Activated CD8-positive, alpha-beta T cell treated with anti-CD3 and anti-CD28 coated beads, Interleukin-2, amount 10 ng/mL, durations not matched to agents 7 days and 5 days (primary cell): ENCODE measurements at regions of chr16 and their contacts with region 1.

Region 1: DNA sequence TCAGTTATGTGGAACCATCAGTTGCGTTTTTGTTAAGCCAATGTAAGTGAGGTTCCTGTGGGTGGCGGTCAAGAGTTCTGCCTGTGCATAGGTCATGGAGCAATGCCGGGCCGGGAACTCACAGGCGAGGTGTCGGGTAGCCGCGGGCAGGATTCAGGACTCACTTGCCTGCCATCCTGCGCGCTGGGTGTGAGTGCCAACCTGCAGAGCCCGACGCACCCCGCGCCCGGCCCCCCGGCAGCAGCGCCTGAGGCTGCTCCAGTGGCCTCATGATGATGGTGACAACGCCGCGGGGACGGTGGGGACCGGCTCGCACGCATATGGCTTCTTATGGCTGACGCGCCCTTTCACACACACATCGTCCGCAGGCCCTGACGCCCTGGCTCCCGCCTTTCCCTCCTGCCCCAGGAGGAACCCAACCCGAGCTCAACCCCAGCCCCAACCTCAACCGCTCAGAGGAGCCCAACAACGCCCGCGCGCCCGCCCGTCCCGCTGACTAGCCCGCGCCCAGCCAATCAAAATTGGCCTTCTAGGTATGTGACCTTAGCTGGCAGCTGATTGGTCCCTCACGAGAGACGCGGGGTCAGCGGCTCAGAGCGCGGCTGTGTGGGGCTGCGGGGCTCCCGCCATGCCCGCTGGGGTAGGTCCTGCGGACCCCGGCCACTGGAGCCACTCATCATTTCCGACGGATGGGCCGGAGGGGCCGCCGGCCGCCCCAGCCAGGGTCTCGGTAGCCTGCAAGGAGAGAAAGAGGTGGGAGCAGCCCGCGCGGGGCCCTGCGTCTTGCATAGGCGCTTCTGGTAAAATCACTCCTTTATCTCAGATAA is at the start of gene C16orf95:
- DNase-seq: peak; percentile 96
- ATAC-seq: peak; percentile 93
- H3K4me3 Mint-ChIP-seq: peak within 1 kb of the TSS; percentile 89
- H3K27ac Mint-ChIP-seq: peak within 1 kb of the TSS; percentile 97
- H3K4me1 Mint-ChIP-seq: peaks cover 17% of the 10 kb centered on the region
- H3K27me3 Mint-ChIP-seq: no peaks in the 10 kb centered on the region
- total RNA-seq, gene C16orf95: 7.2 to 9.4 TPM

Region 2: GRCh38 chr16:87305505-87306391 is 11.4 kb before region 1 on chr16:
- CTCF ChIA-PET with region 1: interaction called, 12 read pairs
- POLR2A ChIA-PET with region 1: interaction called, 32 read pairs
- DNase-seq: no peak
- ATAC-seq: no peak
- H3K4me3 Mint-ChIP-seq: no peak overlapping the region
- H3K27ac Mint-ChIP-seq: no peak overlapping the region
- H3K4me1 Mint-ChIP-seq: peaks cover 25% of the 10 kb centered on the region
- H3K27me3 Mint-ChIP-seq: no peaks in the 10 kb centered on the region

Region 3: GRCh38 chr16:87387942-87388817 is 71.0 kb after region 1 on chr16:
- CTCF ChIA-PET with region 1: interaction called, 25 read pairs
- POLR2A ChIA-PET with region 1: interaction called, 14 read pairs
- DNase-seq: peak; percentile 94
- ATAC-seq: peak; percentile 66
- H3K4me3 Mint-ChIP-seq: peak overlapping the region; percentile 56
- H3K27ac Mint-ChIP-seq: peak overlapping the region; percentile 91
- H3K4me1 Mint-ChIP-seq: peaks cover 43% of the 10 kb centered on the region
- H3K27me3 Mint-ChIP-seq: peaks cover 2% of the 10 kb centered on the region

Region 4: DNA sequence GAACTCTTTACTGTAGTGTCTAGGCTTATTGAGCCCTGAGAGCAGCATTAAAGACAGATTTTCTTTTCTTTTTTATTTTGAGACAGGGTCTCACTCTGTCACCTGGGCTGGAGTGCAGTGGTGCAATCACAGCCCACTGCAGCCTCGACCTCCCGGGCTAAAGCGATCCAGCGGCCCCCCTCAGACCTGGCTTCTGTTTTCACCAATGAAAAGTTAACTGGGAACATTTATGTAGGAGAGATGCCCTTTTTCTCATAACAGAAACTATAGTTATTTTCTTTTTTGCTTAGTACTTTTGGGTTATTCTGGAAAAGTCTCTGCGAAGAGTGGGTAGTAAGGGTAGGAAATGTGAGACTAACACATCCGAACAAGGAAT is 76.5 kb after region 1 on chr16:
- CTCF ChIA-PET with region 1: interaction called, 17 read pairs
- POLR2A ChIA-PET with region 1: interaction called, 13 read pairs
- DNase-seq: no peak
- ATAC-seq: no peak
- H3K4me3 Mint-ChIP-seq: peak overlapping the region; percentile 84
- H3K27ac Mint-ChIP-seq: peak overlapping the region; percentile 91
- H3K4me1 Mint-ChIP-seq: peaks cover 40% of the 10 kb centered on the region
- H3K27me3 Mint-ChIP-seq: no peaks in the 10 kb centered on the region